Breast epithelium (tissue), 4 donors: ENCODE measurements at regions of chr1 and their contacts with region 1.

Region 1: GRCh38 chr1:115506926-115507589 is 134.7 kb upstream of the VANGL1 start:
- DNase-seq: no peak
- H3K4me3 ChIP-seq: no peak overlapping the region
- H3K27ac ChIP-seq: no peak overlapping the region
- H3K4me1 ChIP-seq: no peaks in the 10 kb centered on the region
- H3K27me3 ChIP-seq: no peaks in the 10 kb centered on the region
- CTCF ChIP-seq: no peak
- POLR2A ChIP-seq: no peak

Region 2: DNA sequence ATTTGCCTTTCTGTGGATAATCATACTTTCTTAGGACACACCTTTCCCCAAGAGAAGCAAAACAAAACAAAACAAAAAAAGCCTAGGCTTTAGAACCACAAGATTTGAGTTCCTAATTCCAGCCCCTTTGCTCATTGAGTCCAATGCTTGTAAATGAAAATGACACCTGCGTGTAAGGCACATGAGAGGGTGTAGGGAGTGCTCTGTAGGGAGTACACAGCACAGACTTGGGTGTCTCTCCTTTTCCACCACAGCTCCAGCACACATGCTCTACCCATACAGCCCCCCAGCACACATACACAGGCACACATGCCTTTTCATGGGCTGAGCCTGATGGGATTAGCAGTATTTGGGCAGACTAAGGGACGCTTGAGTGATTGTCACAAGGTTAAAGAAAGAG is 159.8 kb before region 1 on chr1:
- intact Hi-C with region 1: loop called (anchors 5 kb)
- DNase-seq: no peak
- H3K4me3 ChIP-seq: no peak overlapping the region
- H3K27ac ChIP-seq: no peak overlapping the region
- H3K4me1 ChIP-seq: no peaks in the 10 kb centered on the region
- H3K27me3 ChIP-seq: no peaks in the 10 kb centered on the region
- CTCF ChIP-seq: no peak
- POLR2A ChIP-seq: no peak

Region 3: DNA sequence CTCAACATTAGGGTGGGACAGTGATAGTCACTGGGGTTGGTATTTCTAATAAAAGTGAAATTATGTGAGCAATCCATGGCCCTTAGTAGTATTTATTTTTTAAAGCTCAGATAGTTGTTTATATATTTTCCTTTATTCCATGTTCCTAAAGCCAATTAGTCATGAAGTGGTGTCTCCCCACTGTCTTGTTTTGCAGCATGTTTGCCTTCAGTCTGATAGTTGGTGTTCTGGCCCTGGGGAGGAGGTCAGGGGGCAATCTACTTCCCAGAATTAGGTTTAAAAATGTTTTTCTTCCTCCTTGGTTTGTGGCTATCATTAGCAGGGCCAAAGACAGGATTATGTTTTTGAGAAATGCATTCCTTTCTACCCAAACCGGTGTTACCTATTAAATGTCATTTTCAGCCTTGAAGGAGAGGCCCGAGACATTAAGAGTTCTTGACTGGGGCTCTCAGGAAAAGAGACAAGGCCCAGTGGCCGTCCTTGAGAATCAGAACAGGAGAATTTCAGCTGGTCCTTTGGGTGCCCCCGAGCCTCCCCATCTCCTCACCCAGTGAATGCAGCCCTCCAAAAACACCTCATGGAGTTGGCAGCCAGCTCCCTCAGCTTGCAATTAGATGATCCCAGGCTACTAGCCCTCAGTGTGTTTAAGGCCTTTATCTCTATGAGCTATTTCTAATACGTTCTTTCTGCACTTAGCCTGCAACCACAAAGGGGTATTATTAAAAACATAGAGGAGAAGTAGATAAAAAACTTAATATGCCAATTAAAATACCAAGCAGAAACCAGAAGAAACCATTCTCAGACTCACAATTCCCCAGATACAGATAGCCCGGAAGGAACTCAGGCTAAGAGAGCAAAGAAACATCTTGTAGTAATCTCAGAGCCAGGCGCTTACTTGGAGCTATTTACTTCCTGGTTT is 97.7 kb before region 1 on chr1:
- intact Hi-C with region 1: no loop called
- DNase-seq: no peak
- H3K4me3 ChIP-seq: no peak overlapping the region
- H3K27ac ChIP-seq: peak overlapping the region in 1 of 2 donors; percentile 26
- H3K4me1 ChIP-seq: no peaks in the 10 kb centered on the region
- H3K27me3 ChIP-seq: no peaks in the 10 kb centered on the region
- CTCF ChIP-seq: no peak
- POLR2A ChIP-seq: no peak